Activated naive CD4-positive, alpha-beta T cell treated with anti-CD3 and anti-CD28 coated beads for 36 hours (primary cell): ENCODE measurements at regions of chr2 and their contacts with region 1.

Region 1: GRCh38 chr2:100984892-100985379 is 17.2 kb upstream of the RPL31 start:
- DNase-seq: peak; percentile 85
- H3K4me3 Mint-ChIP-seq: no peak overlapping the region
- H3K27ac Mint-ChIP-seq: no peak overlapping the region
- H3K4me1 Mint-ChIP-seq: no peaks in the 10 kb centered on the region
- H3K27me3 Mint-ChIP-seq: no peaks in the 10 kb centered on the region

Region 2: DNA sequence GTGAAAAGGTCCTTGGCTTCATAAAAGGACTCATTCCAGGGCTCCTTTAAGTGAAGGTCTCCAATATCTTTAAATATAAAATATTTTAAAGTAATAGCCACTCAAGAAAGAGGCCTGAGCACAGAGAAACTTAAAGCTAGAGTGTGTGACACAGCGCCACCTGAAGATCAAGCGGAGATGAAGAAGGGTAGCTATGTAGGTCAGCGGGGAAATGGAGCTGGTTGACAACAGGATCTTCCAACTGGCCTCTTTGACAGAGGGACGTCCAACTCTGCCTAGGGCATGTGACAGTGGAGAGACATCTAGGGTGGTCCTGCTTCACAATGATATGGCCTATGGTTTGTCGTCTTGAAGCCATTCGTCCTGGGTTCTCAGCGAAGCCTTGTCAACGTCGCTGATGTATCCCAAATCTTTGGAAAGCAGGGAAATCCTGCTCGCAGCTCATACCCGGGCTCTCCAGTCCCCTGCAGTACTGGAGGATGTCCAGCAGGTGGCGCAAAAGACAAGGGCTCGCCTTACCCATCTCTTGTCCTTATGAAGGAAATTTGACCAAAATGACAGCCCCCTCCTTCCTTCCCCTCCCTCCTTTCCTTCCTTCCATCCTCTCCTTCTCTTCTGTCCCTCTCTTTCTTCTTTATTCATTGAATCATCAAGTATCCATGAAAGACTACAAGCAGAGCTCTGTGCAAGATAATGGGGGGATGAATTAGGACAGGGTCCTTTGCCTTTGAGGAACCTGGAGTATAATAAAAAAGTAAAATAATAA is 722.2 kb before region 1 on chr2:
- CTCF ChIA-PET with region 1: no interaction called
- intact Hi-C with region 1: loop called (anchors 10 kb)
- DNase-seq: peak; percentile 78
- H3K4me3 Mint-ChIP-seq: no peak overlapping the region
- H3K27ac Mint-ChIP-seq: no peak overlapping the region
- H3K4me1 Mint-ChIP-seq: no peaks in the 10 kb centered on the region
- H3K27me3 Mint-ChIP-seq: no peaks in the 10 kb centered on the region

Region 3: GRCh38 chr2:100427628-100428258 is 557.2 kb before region 1 on chr2:
- CTCF ChIA-PET with region 1: no interaction called
- intact Hi-C with region 1: loop called (anchors 5 kb)
- DNase-seq: peak; percentile 89
- H3K4me3 Mint-ChIP-seq: no peak overlapping the region
- H3K27ac Mint-ChIP-seq: no peak overlapping the region
- H3K4me1 Mint-ChIP-seq: peaks cover 4% of the 10 kb centered on the region
- H3K27me3 Mint-ChIP-seq: no peaks in the 10 kb centered on the region

Region 4: GRCh38 chr2:100692381-100692780 is 292.6 kb before region 1 on chr2:
- CTCF ChIA-PET with region 1: no interaction called
- intact Hi-C with region 1: no loop called
- DNase-seq: no peak
- H3K4me3 Mint-ChIP-seq: no peak overlapping the region
- H3K27ac Mint-ChIP-seq: no peak overlapping the region
- H3K4me1 Mint-ChIP-seq: peaks cover 3% of the 10 kb centered on the region
- H3K27me3 Mint-ChIP-seq: no peaks in the 10 kb centered on the region

Region 5: DNA sequence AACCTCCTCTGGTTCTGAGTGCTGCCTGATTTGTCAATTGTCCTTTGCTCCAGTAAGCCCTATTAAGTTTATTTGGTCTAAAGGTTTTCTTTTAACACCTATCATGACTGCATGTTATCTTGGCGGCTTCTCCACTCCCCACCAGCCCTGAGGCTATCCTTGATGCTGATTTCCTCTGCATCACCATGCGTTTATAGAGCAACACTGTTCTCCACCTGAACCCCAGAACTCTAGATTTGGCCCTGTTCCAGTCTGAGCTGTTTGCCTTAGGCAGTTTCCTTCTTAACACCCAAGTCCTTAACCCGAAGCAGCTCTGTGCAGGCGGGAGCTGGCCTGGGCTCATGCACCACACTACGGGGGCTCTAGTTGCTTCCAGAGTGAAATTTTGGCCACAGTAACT is 263.2 kb before region 1 on chr2:
- CTCF ChIA-PET with region 1: interaction called, 3 read pairs
- intact Hi-C with region 1: loop called (anchors 2 kb)
- DNase-seq: no peak
- H3K4me3 Mint-ChIP-seq: no peak overlapping the region
- H3K27ac Mint-ChIP-seq: no peak overlapping the region
- H3K4me1 Mint-ChIP-seq: no peaks in the 10 kb centered on the region
- H3K27me3 Mint-ChIP-seq: no peaks in the 10 kb centered on the region

Region 6: DNA sequence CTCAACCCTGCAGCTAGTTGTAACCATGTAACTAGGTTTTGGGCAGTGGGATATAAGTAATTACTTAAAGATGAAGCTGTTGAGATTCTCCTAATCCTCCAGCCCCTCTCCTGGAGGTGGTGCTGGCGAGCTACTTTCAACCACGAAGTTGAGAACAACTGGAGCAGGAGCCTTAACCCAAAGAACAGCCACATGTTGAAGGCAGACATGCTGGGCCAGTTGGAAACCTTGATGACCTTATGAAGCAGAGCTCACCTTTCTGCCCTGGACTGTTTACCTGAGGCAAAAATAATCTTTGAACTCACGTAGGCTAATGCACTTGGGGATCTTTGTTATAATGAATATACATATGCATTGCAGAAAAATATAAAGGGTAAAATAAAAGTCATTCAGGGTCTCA is 254.6 kb before region 1 on chr2:
- CTCF ChIA-PET with region 1: interaction called, 24 read pairs
- intact Hi-C with region 1: loop called (anchors 1 kb)
- DNase-seq: peak; percentile 78
- H3K4me3 Mint-ChIP-seq: no peak overlapping the region
- H3K27ac Mint-ChIP-seq: no peak overlapping the region
- H3K4me1 Mint-ChIP-seq: peaks cover 5% of the 10 kb centered on the region
- H3K27me3 Mint-ChIP-seq: no peaks in the 10 kb centered on the region

Region 7: DNA sequence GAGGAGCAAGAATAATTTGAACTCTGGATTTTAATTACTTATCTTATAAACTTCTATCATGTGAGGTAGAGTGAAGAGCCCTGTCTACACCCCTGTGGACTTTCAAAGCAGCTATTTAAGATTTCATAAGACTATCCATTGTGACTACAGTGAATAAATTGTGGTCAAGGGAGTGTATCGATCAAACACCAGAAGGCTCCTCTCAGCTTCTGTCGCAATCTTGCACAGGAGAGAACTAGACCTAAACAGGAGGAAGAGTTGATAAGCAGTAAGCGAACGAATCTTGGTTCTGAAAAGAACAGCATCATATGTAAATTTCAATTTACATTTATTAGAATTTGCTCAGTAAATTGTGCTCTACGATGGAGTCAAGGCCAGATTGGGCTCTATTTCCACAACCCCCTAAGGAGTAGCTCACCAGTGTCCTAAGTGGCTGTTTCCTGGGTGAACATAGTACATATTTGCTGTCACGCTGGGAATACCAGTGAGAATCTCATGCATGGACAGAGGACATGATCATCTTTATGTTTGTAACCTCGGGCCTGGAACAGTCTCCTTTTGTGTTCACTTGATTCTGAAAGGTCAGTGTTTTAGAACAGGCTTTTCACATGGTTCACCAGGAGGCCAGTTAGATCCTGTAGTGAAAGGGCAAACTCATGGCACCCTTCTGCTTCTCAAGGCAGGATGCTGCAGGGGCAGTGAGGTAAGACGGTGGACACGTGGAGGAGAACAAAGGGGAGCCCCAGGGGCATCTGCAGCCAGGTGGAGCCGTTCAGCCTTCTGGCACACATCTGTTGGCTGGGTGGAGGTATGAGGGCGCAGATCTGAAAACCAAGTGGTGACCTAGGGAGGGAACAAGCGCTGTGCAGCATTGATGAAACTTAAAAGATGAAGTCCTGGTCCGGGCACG is 131.7 kb before region 1 on chr2:
- CTCF ChIA-PET with region 1: no interaction called
- intact Hi-C with region 1: loop called (anchors 1 kb)
- DNase-seq: peak; percentile 25
- H3K4me3 Mint-ChIP-seq: no peak overlapping the region
- H3K27ac Mint-ChIP-seq: no peak overlapping the region
- H3K4me1 Mint-ChIP-seq: no peaks in the 10 kb centered on the region
- H3K27me3 Mint-ChIP-seq: no peaks in the 10 kb centered on the region